ENCODE measurements at regions of chr5 and their contacts with region 1.

Region 1: GRCh38 chr5:36397901-36398536 is 96.3 kb upstream of the RANBP3L start:
- DNase-seq: no peak
- H3K4me3 ChIP-seq: no peak overlapping the region
- H3K27ac ChIP-seq: no peak overlapping the region
- H3K4me1 ChIP-seq: peaks cover 0 to 5% (median 0%) of the 10 kb centered on the region in 3 donors
- H3K27me3 ChIP-seq: no peaks in the 10 kb centered on the region
- CTCF ChIP-seq: peak in 5 of 6 experiments; percentile 13 to 55 (median 28)
- POLR2A ChIP-seq: no peak

Region 2: DNA sequence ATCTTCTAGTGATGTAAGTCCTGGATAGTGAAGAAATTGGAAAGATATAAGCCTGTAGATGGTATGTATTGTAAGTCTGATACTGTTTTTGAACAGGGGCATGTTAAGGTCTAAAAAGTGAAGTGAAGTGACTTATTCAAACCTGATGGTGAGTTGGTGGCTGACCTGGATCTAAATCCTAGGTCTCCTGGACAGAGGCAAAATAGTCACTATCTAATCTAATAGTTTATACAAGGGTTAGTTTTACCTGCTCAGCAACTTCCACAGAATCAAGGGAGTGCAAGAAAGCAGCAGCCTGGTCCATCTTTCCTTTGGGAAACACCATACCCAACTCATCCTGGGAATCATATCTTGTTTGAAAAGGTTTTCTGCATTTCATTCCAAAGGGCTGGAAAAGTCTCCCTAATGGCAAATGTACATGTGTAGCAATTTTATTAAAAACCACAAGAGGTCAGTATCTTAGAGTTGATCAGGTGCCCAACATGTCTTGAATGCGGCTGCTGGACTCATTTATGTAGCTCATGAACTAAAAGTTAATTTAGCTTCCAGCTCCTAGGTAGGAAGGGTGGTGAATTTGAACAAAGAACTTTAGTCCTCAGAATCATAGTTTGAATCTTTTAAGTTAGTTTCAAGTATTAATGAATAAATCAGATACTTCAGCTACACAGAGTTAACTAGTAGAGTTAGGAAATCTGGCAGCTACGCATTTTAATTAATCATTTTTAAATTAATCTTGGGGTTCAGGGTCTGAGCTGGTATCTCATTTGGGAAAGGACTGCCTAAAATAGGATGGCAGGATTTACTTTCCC is 220.1 kb before region 1 on chr5:
- intact Hi-C with region 1: loop called (anchors 10 kb)
- DNase-seq: no peak
- H3K4me3 ChIP-seq: no peak overlapping the region
- H3K27ac ChIP-seq: no peak overlapping the region
- H3K4me1 ChIP-seq: no peaks in the 10 kb centered on the region
- H3K27me3 ChIP-seq: no peaks in the 10 kb centered on the region
- CTCF ChIP-seq: peak in 5 of 6 experiments; percentile 35 to 62 (median 47)
- POLR2A ChIP-seq: no peak

Region 3: GRCh38 chr5:36279054-36279698 is 118.8 kb before region 1 on chr5:
- intact Hi-C with region 1: loop called (anchors 10 kb)
- DNase-seq: no peak
- H3K4me3 ChIP-seq: no peak overlapping the region
- H3K27ac ChIP-seq: no peak overlapping the region
- H3K4me1 ChIP-seq: no peaks in the 10 kb centered on the region
- H3K27me3 ChIP-seq: no peaks in the 10 kb centered on the region
- CTCF ChIP-seq: no peak
- POLR2A ChIP-seq: no peak

Region 4: GRCh38 chr5:36751886-36752285 is 353.9 kb after region 1 on chr5:
- intact Hi-C with region 1: no loop called
- DNase-seq: no peak
- H3K4me3 ChIP-seq: no peak overlapping the region
- H3K27ac ChIP-seq: no peak overlapping the region
- H3K4me1 ChIP-seq: no peaks in the 10 kb centered on the region
- H3K27me3 ChIP-seq: no peaks in the 10 kb centered on the region
- CTCF ChIP-seq: no peak
- POLR2A ChIP-seq: no peak